ENCODE measurements at regions of chr16 and their contacts with region 1.

Region 1: DNA sequence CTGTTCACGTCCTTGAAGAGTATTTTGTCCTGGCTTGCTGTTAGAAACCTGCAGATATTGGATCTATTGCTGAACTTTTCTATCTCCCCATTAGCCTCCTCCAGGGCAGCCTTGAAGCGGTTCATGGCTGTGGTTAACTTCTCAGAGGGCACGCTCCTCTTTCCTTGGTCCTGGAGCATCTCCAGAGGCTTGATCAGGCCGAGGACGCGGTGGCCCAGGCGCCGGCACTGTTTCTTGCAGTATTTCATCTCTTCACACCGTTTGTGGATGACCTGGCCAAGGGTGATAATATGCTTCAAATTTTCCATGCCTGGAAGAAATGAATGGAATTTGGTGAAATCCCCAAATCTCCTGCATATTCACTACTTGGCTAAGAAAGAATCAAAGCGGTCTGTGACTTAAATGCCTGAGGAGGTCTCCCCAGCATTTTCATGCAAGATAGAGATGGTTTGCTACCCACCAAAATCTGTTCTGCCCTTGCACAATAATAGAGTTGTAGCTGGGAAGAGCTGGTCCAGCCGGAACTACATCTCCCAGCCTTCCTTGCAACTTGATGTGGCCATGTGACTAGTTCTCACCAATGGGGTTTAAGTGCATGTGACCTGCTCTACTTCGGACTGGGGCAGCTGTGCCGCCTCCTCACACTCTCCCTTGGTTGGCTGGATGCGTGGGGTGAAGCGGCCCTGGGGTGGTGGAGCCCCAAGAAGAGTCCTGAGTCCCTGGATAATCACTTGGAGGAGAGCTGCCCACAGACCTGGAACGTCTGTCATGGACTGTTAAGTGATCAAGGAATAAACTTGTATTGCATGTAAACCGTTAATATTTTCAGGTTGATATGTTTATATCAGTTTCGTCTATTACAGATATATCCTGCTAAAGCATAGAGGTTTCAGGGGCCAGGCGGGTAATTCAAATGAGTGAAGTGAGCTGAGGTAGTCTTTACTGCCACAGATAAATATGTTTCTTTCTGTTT is 4.9 kb downstream of the MLKL start:
- DNase-seq: peak; percentile 92
- H3K4me3 Mint-ChIP-seq: peak overlapping the region; percentile 82
- H3K27ac Mint-ChIP-seq: peak overlapping the region; percentile 86
- H3K4me1 Mint-ChIP-seq: peaks cover 34% of the 10 kb centered on the region
- H3K27me3 Mint-ChIP-seq: no peaks in the 10 kb centered on the region

Region 2: DNA sequence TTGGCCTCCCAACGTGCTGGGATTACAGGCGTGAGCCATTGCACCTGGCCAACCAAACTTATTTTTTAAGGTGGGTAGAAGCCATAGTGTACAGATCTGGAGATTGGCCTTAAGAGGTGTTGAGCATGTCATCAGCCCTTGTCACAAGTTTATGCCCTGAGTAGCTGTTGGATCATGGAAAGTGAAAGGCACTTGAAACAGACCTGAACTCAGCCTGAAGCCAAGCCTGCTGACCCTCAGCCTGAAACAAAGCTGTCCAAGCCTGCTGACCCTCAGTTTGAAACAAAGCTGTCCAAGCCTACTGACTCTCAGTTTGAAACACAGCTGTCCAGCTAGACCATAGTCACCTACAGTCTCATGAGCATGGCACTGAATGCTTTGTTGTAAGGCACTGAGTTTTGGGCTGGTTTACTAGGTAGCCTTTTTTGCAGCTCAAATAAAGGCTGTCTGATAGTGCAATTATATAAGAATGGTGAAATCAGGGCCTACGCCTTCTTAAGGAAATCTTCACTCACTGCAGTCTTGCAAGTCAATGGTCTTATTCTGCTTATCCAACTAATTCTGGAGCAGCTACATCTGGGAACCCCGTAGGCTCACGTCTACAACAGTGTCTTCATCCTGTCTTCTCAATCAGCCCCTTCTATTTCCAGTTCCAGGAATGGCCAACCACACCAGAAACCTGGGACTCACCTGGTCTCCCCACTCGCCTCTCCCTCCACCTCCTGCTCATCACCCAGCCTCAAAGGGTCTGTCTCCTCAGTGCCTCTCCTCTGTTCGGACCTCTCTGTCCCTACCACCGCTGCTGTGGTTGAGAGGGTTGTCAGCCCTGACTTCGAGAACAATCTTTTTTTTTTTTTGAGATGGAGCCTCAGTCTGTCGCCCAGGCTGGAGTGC is 322.5 kb before region 1 on chr16:
- intact Hi-C with region 1: loop called (anchors 5 kb)
- DNase-seq: peak; percentile 63
- H3K4me3 Mint-ChIP-seq: no peak overlapping the region
- H3K27ac Mint-ChIP-seq: no peak overlapping the region
- H3K4me1 Mint-ChIP-seq: peaks cover 1% of the 10 kb centered on the region
- H3K27me3 Mint-ChIP-seq: no peaks in the 10 kb centered on the region

Region 3: GRCh38 chr16:74503412-74503811 is 192.3 kb before region 1 on chr16:
- intact Hi-C with region 1: no loop called
- DNase-seq: no peak
- H3K4me3 Mint-ChIP-seq: no peak overlapping the region
- H3K27ac Mint-ChIP-seq: no peak overlapping the region
- H3K4me1 Mint-ChIP-seq: peaks cover 12% of the 10 kb centered on the region
- H3K27me3 Mint-ChIP-seq: no peaks in the 10 kb centered on the region

Region 4: GRCh38 chr16:74635303-74635702 is 60.4 kb before region 1 on chr16:
- intact Hi-C with region 1: no loop called
- DNase-seq: no peak
- H3K4me3 Mint-ChIP-seq: no peak overlapping the region
- H3K27ac Mint-ChIP-seq: peak overlapping the region; percentile 2
- H3K4me1 Mint-ChIP-seq: peaks cover 1% of the 10 kb centered on the region
- H3K27me3 Mint-ChIP-seq: no peaks in the 10 kb centered on the region

Region 5: DNA sequence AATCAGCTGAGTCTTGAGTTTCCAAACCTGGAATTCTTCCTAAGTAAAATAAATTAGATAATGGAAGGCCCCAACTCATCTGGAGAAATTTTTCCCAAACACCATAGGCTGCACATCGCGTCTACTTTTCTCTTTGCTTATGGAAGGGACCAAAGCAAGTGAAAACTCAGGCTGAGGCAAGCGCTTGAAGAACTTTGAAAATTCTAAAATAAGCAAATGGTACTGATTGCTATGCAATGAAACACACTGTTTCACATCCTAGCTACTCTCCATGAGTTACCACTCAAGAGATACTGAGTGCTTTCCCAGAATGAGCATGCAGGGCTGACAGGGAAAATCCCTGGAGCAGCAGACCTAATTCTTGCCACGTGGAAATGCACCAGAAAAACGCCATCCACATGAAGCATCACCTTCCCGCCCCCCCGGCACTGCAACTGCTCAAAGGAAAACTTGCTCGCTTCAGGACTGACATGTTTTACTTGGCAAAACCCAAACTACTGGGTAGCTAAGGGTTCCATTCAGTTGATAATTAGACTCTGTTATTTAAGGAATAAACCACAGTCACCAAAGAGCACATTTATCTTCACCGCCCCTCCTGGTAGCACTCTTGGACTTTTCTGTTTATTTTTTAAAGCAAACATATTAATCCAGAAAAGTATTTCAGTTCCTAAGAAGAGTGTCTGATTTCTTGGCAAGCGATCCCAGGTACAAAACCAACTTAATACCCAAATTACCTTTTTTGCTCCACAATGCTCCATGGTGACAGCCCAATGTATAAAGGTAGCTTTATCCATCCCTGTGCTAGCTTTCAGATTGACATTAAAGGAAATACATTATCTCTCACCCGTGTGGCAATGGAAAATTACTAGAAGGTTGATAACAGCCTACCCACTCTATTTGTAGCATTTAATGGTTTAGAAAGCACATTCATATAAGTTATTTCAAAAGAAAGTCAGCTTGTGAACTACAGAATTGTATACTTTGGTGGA is 226.7 kb after region 1 on chr16:
- intact Hi-C with region 1: no loop called
- DNase-seq: no peak
- H3K4me3 Mint-ChIP-seq: no peak overlapping the region
- H3K27ac Mint-ChIP-seq: no peak overlapping the region
- H3K4me1 Mint-ChIP-seq: no peaks in the 10 kb centered on the region
- H3K27me3 Mint-ChIP-seq: no peaks in the 10 kb centered on the region

Region 6: GRCh38 chr16:74984535-74985296 is 289.0 kb after region 1 on chr16 and contains the start of gene WDR59:
- intact Hi-C with region 1: loop called (anchors 5 kb)
- DNase-seq: peak; percentile 100
- H3K4me3 Mint-ChIP-seq: peak within 1 kb of the TSS; percentile 94
- H3K27ac Mint-ChIP-seq: peak within 1 kb of the TSS; percentile 95
- H3K4me1 Mint-ChIP-seq: peaks cover 16% of the 10 kb centered on the region
- H3K27me3 Mint-ChIP-seq: no peaks in the 10 kb centered on the region
- total RNA-seq, gene WDR59: 80.6 and 91.5 TPM in 2 replicates

Region 7: GRCh38 chr16:75099756-75100602 is 404.2 kb after region 1 on chr16:
- intact Hi-C with region 1: loop called (anchors 5 kb)
- DNase-seq: peak; percentile 86
- H3K4me3 Mint-ChIP-seq: peak overlapping the region; percentile 74
- H3K27ac Mint-ChIP-seq: peak overlapping the region; percentile 95
- H3K4me1 Mint-ChIP-seq: peaks cover 63% of the 10 kb centered on the region
- H3K27me3 Mint-ChIP-seq: no peaks in the 10 kb centered on the region

Region 8: GRCh38 chr16:75148311-75149195 is 452.8 kb after region 1 on chr16 and contains the start of gene ZFP1:
- intact Hi-C with region 1: loop called (anchors 2 kb)
- DNase-seq: peak; percentile 98
- H3K4me3 Mint-ChIP-seq: peak within 1 kb of the TSS; percentile 92
- H3K27ac Mint-ChIP-seq: peak within 1 kb of the TSS; percentile 87
- H3K4me1 Mint-ChIP-seq: peaks cover 19% of the 10 kb centered on the region
- H3K27me3 Mint-ChIP-seq: no peaks in the 10 kb centered on the region
- total RNA-seq, gene ZFP1: 14.3 and 16.5 TPM in 2 replicates

Measured in activated CD4-positive, alpha-beta T cell treated with anti-CD3 and anti-CD28 coated beads, Interleukin-2, amount 10 ng/mL, durations not matched to agents 24 days and 14 days (primary cell).